GM12878 (cell line): ENCODE measurements at regions of chr4 and their contacts with region 1.

Region 1: DNA sequence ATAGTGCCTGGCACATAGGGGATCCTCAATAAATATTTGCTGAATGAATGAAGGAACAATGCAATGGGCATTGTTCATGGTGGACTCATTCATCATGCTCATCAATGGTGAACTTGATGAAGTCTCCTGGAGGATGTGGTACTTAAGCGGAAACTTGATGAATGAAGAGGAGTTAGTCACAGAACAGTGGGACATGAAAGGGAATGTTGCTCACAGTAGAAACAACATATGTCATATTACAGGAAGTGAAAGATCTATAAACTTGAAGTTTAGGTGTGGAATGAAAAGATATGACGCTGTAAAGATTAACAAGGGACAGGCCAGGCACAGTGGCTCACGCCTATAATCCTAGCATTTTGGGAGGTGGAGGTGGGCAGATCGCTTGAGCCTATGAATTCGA is 224.1 kb downstream of the PPP3CA start:
- DNase-seq: no peak
- ATAC-seq: no peak
- H3K4me3 ChIP-seq: no peak overlapping the region
- H3K27ac ChIP-seq: no peak overlapping the region
- H3K4me1 ChIP-seq: no peaks in the 10 kb centered on the region; the same call in 1 of the 2 replicates
- H3K27me3 ChIP-seq: no peaks in the 10 kb centered on the region
- CTCF ChIP-seq: no peak
- EP300 ChIP-seq: no peak
- POLR2A ChIP-seq: no peak
- RAD21 ChIP-seq: no peak

Region 2: GRCh38 chr4:99968330-99968729 is 1154.9 kb before region 1 on chr4:
- CTCF ChIA-PET with region 1: no interaction called
- POLR2A ChIA-PET with region 1: no interaction called
- RAD21 ChIA-PET with region 1: no interaction called
- SMC1A ChIA-PET with region 1: no interaction called
- in situ Hi-C with region 1: no loop called
- intact Hi-C with region 1: no loop called
- DNase-seq: no peak
- ATAC-seq: no peak
- H3K4me3 ChIP-seq: no peak overlapping the region
- H3K27ac ChIP-seq: no peak overlapping the region
- H3K4me1 ChIP-seq: no peaks in the 10 kb centered on the region
- H3K27me3 ChIP-seq: no peaks in the 10 kb centered on the region
- CTCF ChIP-seq: no peak
- EP300 ChIP-seq: no peak
- POLR2A ChIP-seq: no peak
- RAD21 ChIP-seq: no peak

Region 3: GRCh38 chr4:100147198-100147597 is 976.0 kb before region 1 on chr4:
- CTCF ChIA-PET with region 1: no interaction called
- POLR2A ChIA-PET with region 1: no interaction called
- RAD21 ChIA-PET with region 1: no interaction called
- SMC1A ChIA-PET with region 1: no interaction called
- in situ Hi-C with region 1: no loop called
- intact Hi-C with region 1: no loop called
- DNase-seq: no peak
- ATAC-seq: peak; percentile 30; the same call in 2 of the 3 replicates
- H3K4me3 ChIP-seq: no peak overlapping the region
- H3K27ac ChIP-seq: no peak overlapping the region
- H3K4me1 ChIP-seq: no peaks in the 10 kb centered on the region
- H3K27me3 ChIP-seq: no peaks in the 10 kb centered on the region
- CTCF ChIP-seq: no peak
- EP300 ChIP-seq: no peak
- POLR2A ChIP-seq: no peak
- RAD21 ChIP-seq: no peak

Region 4: GRCh38 chr4:100907465-100908454 is 215.5 kb before region 1 on chr4:
- CTCF ChIA-PET with region 1: no interaction called
- POLR2A ChIA-PET with region 1: no interaction called
- RAD21 ChIA-PET with region 1: no interaction called
- SMC1A ChIA-PET with region 1: no interaction called
- in situ Hi-C with region 1: no loop called
- intact Hi-C with region 1: no loop called
- DNase-seq: no peak
- ATAC-seq: no peak
- H3K4me3 ChIP-seq: no peak overlapping the region
- H3K27ac ChIP-seq: no peak overlapping the region
- H3K4me1 ChIP-seq: no peaks in the 10 kb centered on the region
- H3K27me3 ChIP-seq: no peaks in the 10 kb centered on the region
- CTCF ChIP-seq: peak; percentile 22 to 28 (median 27); a peak in 3 of 6 replicates
- EP300 ChIP-seq: no peak
- POLR2A ChIP-seq: no peak
- RAD21 ChIP-seq: peak; percentile 33

Region 5: GRCh38 chr4:101103381-101104142 is 19.7 kb before region 1 on chr4:
- CTCF ChIA-PET with region 1: interaction called, 3 read pairs
- POLR2A ChIA-PET with region 1: interaction called, 3 read pairs
- RAD21 ChIA-PET with region 1: no interaction called
- SMC1A ChIA-PET with region 1: interaction called, 11 read pairs
- in situ Hi-C with region 1: no loop called
- intact Hi-C with region 1: no loop called
- DNase-seq: no peak
- ATAC-seq: peak; percentile 83
- H3K4me3 ChIP-seq: no peak overlapping the region
- H3K27ac ChIP-seq: peak overlapping the region; percentile 34; the same call in 1 of the 2 replicates
- H3K4me1 ChIP-seq: peaks cover 19% of the 10 kb centered on the region
- H3K27me3 ChIP-seq: no peaks in the 10 kb centered on the region
- CTCF ChIP-seq: no peak
- EP300 ChIP-seq: no peak
- POLR2A ChIP-seq: no peak
- RAD21 ChIP-seq: no peak

Region 6: DNA sequence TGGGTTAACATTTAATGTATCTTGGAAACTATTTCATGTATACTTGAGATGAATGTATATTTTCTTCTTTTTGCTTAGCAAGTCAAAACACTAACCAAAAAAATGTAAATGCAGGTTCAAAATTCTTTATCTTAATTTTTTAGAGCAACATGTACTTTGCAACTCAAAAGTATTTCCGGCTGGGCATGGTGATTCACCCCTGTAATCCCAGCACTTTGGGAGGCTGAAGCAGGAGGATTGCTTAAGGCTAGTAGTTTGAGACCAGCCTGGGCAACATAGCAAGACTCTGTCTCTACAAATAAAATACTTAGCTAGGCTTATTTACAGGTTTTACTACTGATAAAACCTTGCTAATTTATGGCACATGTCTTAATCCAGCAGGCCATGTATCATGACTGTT is 302.6 kb after region 1 on chr4:
- CTCF ChIA-PET with region 1: no interaction called
- POLR2A ChIA-PET with region 1: no interaction called
- RAD21 ChIA-PET with region 1: no interaction called
- SMC1A ChIA-PET with region 1: no interaction called
- in situ Hi-C with region 1: no loop called
- intact Hi-C with region 1: no loop called
- DNase-seq: no peak
- ATAC-seq: no peak
- H3K4me3 ChIP-seq: no peak overlapping the region
- H3K27ac ChIP-seq: no peak overlapping the region
- H3K4me1 ChIP-seq: no peaks in the 10 kb centered on the region
- H3K27me3 ChIP-seq: no peaks in the 10 kb centered on the region
- CTCF ChIP-seq: no peak
- EP300 ChIP-seq: no peak
- POLR2A ChIP-seq: no peak
- RAD21 ChIP-seq: no peak